ENCODE measurements at regions of chr1 and their contacts with region 1.

Region 1: GRCh38 chr1:178501705-178502329 is 5.1 kb upstream of the CLEC20A start:
- DNase-seq: peak; percentile 47 to 73
- H3K4me3 ChIP-seq: no peak overlapping the region
- H3K27ac ChIP-seq: no peak overlapping the region
- H3K4me1 ChIP-seq: no peaks in the 10 kb centered on the region
- H3K27me3 ChIP-seq: peaks cover 0 to 3% of the 10 kb centered on the region in 2 donors
- CTCF ChIP-seq: peak; percentile 72 to 93

Region 2: GRCh38 chr1:178031856-178032320 is 469.9 kb before region 1 on chr1:
- intact Hi-C with region 1: loop called (anchors 10 kb)
- DNase-seq: peak; percentile 93 to 96
- H3K4me3 ChIP-seq: no peak overlapping the region
- H3K27ac ChIP-seq: no peak overlapping the region
- H3K4me1 ChIP-seq: peaks cover 0 to 6% (median 0%) of the 10 kb centered on the region in 4 donors
- H3K27me3 ChIP-seq: no peaks in the 10 kb centered on the region
- CTCF ChIP-seq: peak; percentile 84 to 85

Region 3: DNA sequence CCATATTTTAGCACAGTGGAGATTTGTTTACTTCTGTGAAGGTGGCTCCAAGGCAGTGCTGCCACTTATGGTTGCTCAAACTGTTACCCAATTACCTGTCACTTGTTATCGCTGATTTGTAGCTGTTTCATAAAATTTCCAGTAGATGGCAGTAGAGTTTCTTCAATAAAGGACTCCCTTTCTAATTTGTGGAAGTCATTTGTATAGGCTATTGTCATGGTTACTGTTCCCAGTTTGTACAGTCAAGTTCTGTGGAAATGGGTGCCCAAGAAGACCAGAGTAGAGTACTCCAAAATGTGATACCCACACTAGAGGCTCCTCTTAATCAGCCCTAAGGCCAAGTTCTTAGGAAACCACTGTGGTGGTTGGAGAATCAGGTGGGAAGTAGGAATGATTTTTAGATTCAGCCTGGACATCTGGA is 191.1 kb before region 1 on chr1:
- intact Hi-C with region 1: loop called (anchors 5 kb)
- DNase-seq: no peak
- H3K4me3 ChIP-seq: no peak overlapping the region
- H3K27ac ChIP-seq: no peak overlapping the region
- H3K4me1 ChIP-seq: peaks cover 0 to 14% (median 5%) of the 10 kb centered on the region in 4 donors
- H3K27me3 ChIP-seq: no peaks in the 10 kb centered on the region
- CTCF ChIP-seq: peak; percentile 71 to 74

Measured in tibial artery (tissue), 4 donors.